Thyroid gland (tissue), 4 donors: ENCODE measurements at regions of chr11 and their contacts with region 1.

Region 1: GRCh38 chr11:45560155-45560912 is 105.1 kb downstream of the CHST1 start:
- DNase-seq: no peak
- H3K4me3 ChIP-seq: no peak overlapping the region
- H3K27ac ChIP-seq: no peak overlapping the region
- H3K4me1 ChIP-seq: peaks cover 4% of the 10 kb centered on the region in 2 donors
- H3K27me3 ChIP-seq: no peaks in the 10 kb centered on the region
- CTCF ChIP-seq: no peak
- POLR2A ChIP-seq: no peak

Region 2: GRCh38 chr11:45347348-45348082 is 212.8 kb before region 1 on chr11:
- intact Hi-C with region 1: no loop called
- DNase-seq: no peak
- H3K4me3 ChIP-seq: no peak overlapping the region
- H3K27ac ChIP-seq: no peak overlapping the region
- H3K4me1 ChIP-seq: no peaks in the 10 kb centered on the region
- H3K27me3 ChIP-seq: no peaks in the 10 kb centered on the region
- CTCF ChIP-seq: no peak
- POLR2A ChIP-seq: no peak

Region 3: GRCh38 chr11:45444796-45445195 is 115.5 kb before region 1 on chr11:
- intact Hi-C with region 1: no loop called
- DNase-seq: no peak
- H3K4me3 ChIP-seq: no peak overlapping the region
- H3K27ac ChIP-seq: no peak overlapping the region
- H3K4me1 ChIP-seq: no peaks in the 10 kb centered on the region
- H3K27me3 ChIP-seq: no peaks in the 10 kb centered on the region
- CTCF ChIP-seq: no peak
- POLR2A ChIP-seq: no peak

Region 4: GRCh38 chr11:45765836-45766235 is 205.5 kb after region 1 on chr11:
- intact Hi-C with region 1: loop called (anchors 10 kb)
- DNase-seq: peak; percentile 38 to 56
- H3K4me3 ChIP-seq: no peak overlapping the region
- H3K27ac ChIP-seq: no peak overlapping the region
- H3K4me1 ChIP-seq: peaks cover 0 to 5% of the 10 kb centered on the region in 2 donors
- H3K27me3 ChIP-seq: no peaks in the 10 kb centered on the region
- CTCF ChIP-seq: no peak
- POLR2A ChIP-seq: no peak